ENCODE measurements at regions of chr18 and their contacts with region 1.

Region 1: GRCh38 chr18:27461957-27462356 is 276.8 kb upstream of the CHST9 start:
- DNase-seq: no peak
- H3K4me3 ChIP-seq: no peak overlapping the region
- H3K27ac ChIP-seq: no peak overlapping the region
- H3K4me1 ChIP-seq: no peaks in the 10 kb centered on the region
- H3K27me3 ChIP-seq: no peaks in the 10 kb centered on the region
- CTCF ChIP-seq: no peak
- POLR2A ChIP-seq: no peak

Region 2: DNA sequence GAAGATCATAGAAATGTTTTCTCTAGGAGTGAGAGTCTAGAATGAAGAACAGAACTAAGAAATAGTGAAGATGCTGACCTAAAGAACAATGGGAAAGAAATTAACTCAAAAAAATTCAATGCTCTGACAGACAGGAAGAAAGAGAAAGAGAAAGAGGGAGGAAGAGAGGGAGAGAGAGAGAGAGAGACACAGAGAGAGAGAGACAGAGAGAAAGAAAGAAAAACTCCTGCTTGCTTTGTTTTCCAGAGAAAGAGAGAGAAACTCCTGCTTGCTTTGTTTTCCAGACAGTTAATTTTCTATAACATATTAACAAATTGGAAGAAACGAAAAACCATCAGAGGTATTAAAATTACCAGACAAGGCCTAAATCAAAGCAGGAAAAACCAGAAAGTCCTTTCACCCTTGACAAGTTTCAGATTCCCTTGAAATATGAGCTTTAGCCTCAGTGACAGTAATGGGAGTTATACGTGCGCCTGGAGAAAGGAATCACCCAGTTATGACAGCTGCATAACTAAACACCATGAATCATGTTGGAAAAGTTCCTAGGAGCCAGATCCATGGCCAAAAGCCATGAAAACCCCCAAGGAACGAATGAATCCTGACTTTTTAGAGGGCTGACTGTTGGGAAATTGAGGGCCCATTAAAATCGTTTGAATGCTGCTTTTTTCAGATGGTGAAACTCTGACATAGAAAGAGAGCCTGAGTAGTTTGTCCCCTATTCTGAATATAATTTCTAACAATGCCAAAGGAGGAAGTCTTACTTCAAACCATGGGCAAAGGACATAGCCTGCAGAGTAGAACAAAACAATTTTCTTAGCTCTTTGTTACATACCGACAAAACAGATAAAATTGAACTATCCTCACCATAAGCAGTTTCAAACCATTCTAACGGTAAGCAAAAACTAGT is 48.2 kb before region 1 on chr18:
- intact Hi-C with region 1: loop called (anchors 5 kb)
- DNase-seq: no peak
- H3K4me3 ChIP-seq: no peak overlapping the region
- H3K27ac ChIP-seq: peak overlapping the region in 1 of 4 donors; percentile 15
- H3K4me1 ChIP-seq: peaks cover 0 to 16% (median 4%) of the 10 kb centered on the region in 3 donors
- H3K27me3 ChIP-seq: no peaks in the 10 kb centered on the region
- CTCF ChIP-seq: no peak
- POLR2A ChIP-seq: no peak

Measured in esophagus squamous epithelium (tissue), 5 donors.